Activated CD8-positive, alpha-beta T cell treated with anti-CD3 and anti-CD28 coated beads, Interleukin-2, amount 10 ng/mL, durations not matched to agents 7 days and 5 days (primary cell): ENCODE measurements at regions of chr19 and their contacts with region 1.

Region 1: DNA sequence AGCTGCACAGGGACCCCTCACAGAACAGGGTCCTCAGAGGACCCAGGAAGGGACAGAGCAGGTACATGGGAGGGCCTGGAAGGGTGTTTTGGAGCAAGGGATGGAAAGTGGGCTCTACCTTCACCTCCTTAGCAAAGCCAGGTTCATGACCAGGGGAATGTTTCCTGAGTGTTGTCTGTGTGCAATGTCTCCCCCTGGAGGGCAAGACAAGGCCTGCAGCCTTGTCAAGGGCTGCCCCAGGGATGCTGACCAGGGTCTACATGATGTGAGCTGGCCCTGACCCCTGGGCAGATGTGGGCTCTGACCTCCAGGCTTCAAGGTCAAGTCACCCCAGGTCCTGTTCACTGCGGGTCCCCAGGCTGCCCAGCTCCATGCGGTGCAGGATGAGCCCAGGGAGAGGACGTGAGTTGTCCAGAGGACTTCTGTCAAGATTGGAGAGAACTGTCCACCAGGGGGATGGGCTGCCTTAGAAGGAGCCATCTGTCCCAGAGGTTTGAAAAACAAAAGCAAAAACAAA is 1.0 kb upstream of the CEACAM1 start:
- DNase-seq: peak; percentile 80
- ATAC-seq: peak; percentile 75
- H3K4me3 Mint-ChIP-seq: peak overlapping the region; percentile 77
- H3K27ac Mint-ChIP-seq: peak overlapping the region; percentile 90
- H3K4me1 Mint-ChIP-seq: peaks cover 49% of the 10 kb centered on the region
- H3K27me3 Mint-ChIP-seq: no peaks in the 10 kb centered on the region

Region 2: GRCh38 chr19:42455621-42456081 is 73.7 kb before region 1 on chr19:
- CTCF ChIA-PET with region 1: interaction called, 209 read pairs
- POLR2A ChIA-PET with region 1: interaction called, 20 read pairs
- DNase-seq: no peak
- ATAC-seq: no peak
- H3K4me3 Mint-ChIP-seq: no peak overlapping the region
- H3K27ac Mint-ChIP-seq: no peak overlapping the region
- H3K4me1 Mint-ChIP-seq: peaks cover 55% of the 10 kb centered on the region
- H3K27me3 Mint-ChIP-seq: no peaks in the 10 kb centered on the region

Region 3: DNA sequence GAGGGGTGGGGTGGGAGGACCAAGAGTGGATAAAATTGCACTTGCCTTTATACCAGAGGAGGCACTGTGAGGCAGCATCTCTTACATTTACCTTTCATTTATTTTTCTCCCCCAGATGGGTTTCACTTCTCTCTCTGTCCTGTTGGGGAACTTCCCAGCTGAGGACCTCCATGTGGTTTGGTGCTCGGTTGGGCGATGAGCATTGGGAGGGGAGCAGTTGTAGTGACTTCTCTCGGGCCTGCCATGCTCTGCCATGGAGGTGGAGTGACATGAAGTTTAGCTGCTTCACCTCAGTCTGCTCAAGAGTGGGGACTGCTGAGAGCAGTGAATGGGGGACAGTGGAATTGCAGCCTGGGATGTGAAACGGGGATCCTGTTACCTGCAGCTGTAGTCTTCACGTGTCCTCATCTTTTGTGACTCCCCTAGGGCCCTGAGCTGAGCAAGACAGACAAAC is 63.5 kb before region 1 on chr19:
- CTCF ChIA-PET with region 1: interaction called, 24 read pairs
- POLR2A ChIA-PET with region 1: no interaction called
- DNase-seq: no peak
- ATAC-seq: no peak
- H3K4me3 Mint-ChIP-seq: no peak overlapping the region
- H3K27ac Mint-ChIP-seq: peak overlapping the region; percentile 73
- H3K4me1 Mint-ChIP-seq: peaks cover 37% of the 10 kb centered on the region
- H3K27me3 Mint-ChIP-seq: no peaks in the 10 kb centered on the region

Region 4: DNA sequence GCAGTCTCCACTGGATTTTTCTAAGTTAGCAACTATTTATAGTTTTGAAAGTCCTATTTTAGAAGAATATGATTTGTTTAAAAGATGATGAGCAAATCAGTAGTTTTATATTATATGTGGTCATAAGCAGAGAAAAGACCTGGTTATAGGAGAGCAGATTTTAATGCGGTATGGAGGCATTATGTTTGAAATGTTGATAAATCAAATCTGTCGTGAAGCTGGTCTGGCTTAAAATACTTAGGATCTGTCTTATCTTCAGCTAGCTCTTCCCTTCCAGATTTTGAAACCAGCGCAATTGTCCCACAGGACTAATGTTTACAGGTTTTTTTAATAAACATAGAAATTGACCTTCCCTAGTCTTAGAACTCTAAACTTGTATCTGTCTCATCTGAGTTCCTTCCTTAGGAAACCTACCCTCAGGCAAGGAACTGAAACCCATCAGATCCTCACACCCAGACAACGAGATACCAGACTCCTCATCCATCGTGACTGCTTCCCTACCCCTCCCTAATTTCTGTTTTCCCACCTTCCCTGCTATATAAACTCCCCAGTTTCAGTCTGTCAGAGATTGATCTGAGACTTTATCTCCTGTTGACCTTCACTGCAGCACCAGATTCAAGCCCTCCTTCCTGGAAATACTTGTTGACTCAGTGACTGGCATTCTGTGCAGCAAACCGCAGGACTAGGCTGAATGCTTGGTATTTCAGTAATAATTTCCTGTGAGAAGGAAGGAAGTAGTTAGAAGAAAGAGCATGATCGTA is 48.8 kb before region 1 on chr19:
- CTCF ChIA-PET with region 1: interaction called, 11 read pairs
- POLR2A ChIA-PET with region 1: no interaction called
- DNase-seq: peak; percentile 50
- ATAC-seq: peak; percentile 58
- H3K4me3 Mint-ChIP-seq: peak overlapping the region; percentile 48
- H3K27ac Mint-ChIP-seq: peak overlapping the region; percentile 75
- H3K4me1 Mint-ChIP-seq: peaks cover 48% of the 10 kb centered on the region
- H3K27me3 Mint-ChIP-seq: no peaks in the 10 kb centered on the region

Region 5: DNA sequence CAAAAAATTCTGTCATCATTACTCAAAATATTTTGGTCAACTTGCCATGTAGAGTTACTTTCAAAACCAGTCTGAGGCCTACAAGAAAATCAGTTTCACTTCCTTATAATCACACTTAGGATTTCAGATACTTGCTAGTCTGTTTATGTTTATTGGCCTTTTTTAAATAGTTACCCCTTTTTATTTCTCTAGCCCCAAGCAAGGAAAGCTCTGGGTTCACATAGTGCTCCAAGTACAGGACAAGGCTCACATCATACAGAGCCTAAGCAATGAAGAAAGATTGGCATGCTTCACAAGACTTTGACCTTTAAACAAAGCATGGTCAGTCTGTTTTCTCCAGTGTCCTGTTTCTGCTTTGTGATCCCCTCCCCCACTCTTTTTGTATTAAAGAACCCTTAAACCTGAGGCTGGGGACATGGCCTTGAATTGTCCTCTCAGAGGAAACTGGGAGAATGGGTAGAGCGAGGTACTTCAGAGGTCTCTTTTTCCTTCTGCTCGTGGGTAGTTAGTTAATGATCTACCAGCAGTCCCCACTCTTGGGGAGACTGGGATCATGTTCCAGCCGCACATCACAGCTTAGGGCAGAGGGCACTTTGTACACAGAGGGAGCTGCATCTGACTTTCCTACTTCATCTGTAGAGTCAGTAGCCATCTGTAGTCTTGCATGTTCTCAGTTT is 31.7 kb before region 1 on chr19:
- CTCF ChIA-PET with region 1: interaction called, 19 read pairs
- POLR2A ChIA-PET with region 1: no interaction called
- DNase-seq: no peak
- ATAC-seq: no peak
- H3K4me3 Mint-ChIP-seq: no peak overlapping the region
- H3K27ac Mint-ChIP-seq: peak overlapping the region; percentile 60
- H3K4me1 Mint-ChIP-seq: peaks cover 54% of the 10 kb centered on the region
- H3K27me3 Mint-ChIP-seq: no peaks in the 10 kb centered on the region

Region 6: GRCh38 chr19:42508892-42509444 is 20.3 kb before region 1 on chr19:
- CTCF ChIA-PET with region 1: interaction called, 21 read pairs
- POLR2A ChIA-PET with region 1: interaction called, 3 read pairs
- DNase-seq: no peak
- ATAC-seq: no peak
- H3K4me3 Mint-ChIP-seq: no peak overlapping the region
- H3K27ac Mint-ChIP-seq: no peak overlapping the region
- H3K4me1 Mint-ChIP-seq: peaks cover 31% of the 10 kb centered on the region
- H3K27me3 Mint-ChIP-seq: no peaks in the 10 kb centered on the region

Region 7: DNA sequence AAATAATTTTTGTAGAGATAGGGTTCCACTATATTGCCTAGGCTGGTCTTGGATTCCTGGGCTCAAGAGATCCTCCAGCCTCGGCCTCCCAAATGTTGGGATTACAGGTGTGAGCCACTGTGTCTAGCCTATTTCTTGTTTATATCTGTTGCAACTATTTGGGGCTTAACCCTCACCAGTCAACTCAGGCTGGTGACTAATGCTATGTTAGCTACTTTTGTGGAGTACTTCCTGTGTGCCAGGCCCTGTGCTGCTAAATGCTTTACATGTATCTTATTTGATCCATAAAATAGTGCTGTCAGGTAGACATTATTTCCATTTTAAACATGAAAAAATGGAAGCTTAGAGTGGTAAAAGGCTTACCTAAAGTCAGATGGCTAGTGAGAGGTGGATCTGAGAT is 14.9 kb before region 1 on chr19:
- CTCF ChIA-PET with region 1: interaction called, 21 read pairs
- POLR2A ChIA-PET with region 1: interaction called, 4 read pairs
- DNase-seq: no peak
- ATAC-seq: no peak
- H3K4me3 Mint-ChIP-seq: no peak overlapping the region
- H3K27ac Mint-ChIP-seq: no peak overlapping the region
- H3K4me1 Mint-ChIP-seq: peaks cover 41% of the 10 kb centered on the region
- H3K27me3 Mint-ChIP-seq: no peaks in the 10 kb centered on the region